ENCODE measurements at regions of chr6 and their contacts with region 1.

Region 1: DNA sequence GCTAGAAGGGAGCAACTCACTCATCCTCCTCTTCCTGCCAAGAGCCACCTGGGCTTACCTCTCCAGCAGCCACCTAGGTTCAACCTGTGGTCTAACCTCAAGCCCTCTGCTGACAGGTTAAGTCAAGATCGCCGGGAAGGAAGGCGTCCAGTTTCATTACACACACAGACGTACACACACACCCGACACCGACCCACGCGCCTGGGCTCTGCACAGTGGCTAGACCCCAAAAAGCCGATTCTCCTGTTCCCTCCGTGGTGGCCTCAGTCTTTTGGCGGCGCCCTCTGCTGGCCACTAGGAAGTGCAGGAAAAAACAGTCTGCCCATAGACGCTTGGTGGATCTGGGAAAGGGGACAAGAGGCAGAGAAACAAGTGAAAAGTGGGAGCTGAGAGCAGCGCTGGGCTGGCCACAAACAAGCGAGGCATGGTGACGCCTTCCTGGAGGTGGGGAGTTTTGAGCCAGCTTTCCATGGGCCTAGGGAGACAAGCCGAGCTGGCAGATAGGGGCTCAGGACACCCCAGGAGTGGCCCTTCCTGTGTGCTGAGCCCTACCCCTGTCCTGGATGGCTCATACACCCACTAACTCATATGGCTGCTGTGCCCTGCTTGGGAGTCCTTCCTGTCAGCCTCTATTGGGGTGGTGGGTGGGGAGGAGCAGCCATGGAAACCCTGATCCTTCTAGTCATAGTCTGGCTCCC is 52.7 kb downstream of the MRPL14 start:
- DNase-seq: peak; percentile 60 to 81 (median 72)
- H3K4me3 ChIP-seq: no peak overlapping the region
- H3K27ac ChIP-seq: peak overlapping the region; percentile 19 to 56
- H3K4me1 ChIP-seq: peaks cover 11% of the 10 kb centered on the region
- H3K27me3 ChIP-seq: no peaks in the 10 kb centered on the region
- CTCF ChIP-seq: peak; percentile 77 to 89 (median 77)
- EP300 ChIP-seq: no peak
- POLR2A ChIP-seq: no peak

Region 2: DNA sequence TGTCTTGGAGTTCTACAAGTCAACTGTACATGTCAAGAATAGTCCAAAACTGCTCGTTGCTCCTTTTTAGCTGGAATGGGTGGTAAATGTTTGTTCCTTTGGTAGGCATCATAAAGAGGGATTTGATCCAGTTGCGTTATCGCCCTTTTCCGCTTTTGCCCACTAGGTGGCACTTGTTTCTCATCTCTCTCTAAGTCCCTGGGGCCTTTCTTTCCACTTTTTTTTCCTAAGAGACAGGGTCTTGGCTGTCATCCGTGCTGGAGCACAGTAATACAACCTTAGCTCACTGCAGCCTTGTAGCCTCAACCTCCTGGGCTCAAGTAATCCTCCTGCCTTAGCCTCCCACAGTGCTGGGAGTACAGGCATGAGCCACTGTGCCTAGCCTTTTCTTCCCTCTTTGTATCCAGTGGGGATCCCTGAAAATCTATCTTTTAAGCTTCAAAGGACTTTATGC is 466.3 kb before region 1 on chr6:
- intact Hi-C with region 1: loop called in 2 of 4 experiments (anchors 5 to 10 kb)
- DNase-seq: peak; percentile 49 to 73 (median 67)
- H3K4me3 ChIP-seq: no peak overlapping the region
- H3K27ac ChIP-seq: no peak overlapping the region
- H3K4me1 ChIP-seq: no peaks in the 10 kb centered on the region
- H3K27me3 ChIP-seq: no peaks in the 10 kb centered on the region
- CTCF ChIP-seq: peak; percentile 40 to 64 (median 61)
- EP300 ChIP-seq: no peak
- POLR2A ChIP-seq: no peak

Region 3: GRCh38 chr6:43769526-43770416 is 304.8 kb before region 1 on chr6 and contains the start of gene VEGFA:
- intact Hi-C with region 1: loop called (anchors 2 kb)
- DNase-seq: peak; percentile 86 to 94 (median 91)
- H3K4me3 ChIP-seq: peak within 1 kb of the TSS; percentile 78
- H3K27ac ChIP-seq: peak within 1 kb of the TSS; percentile 74 to 76
- H3K4me1 ChIP-seq: peaks cover 14% of the 10 kb centered on the region
- H3K27me3 ChIP-seq: no peaks in the 10 kb centered on the region
- CTCF ChIP-seq: peak; percentile 84 to 91 (median 90)
- EP300 ChIP-seq: no peak
- POLR2A ChIP-seq: peak; percentile 61
- total RNA-seq, gene VEGFA: 19.2 to 123 (median 45.2) TPM

Measured in ovary (tissue), 10 donors.